ENCODE measurements at regions of chr12 and their contacts with region 1.

Region 1: DNA sequence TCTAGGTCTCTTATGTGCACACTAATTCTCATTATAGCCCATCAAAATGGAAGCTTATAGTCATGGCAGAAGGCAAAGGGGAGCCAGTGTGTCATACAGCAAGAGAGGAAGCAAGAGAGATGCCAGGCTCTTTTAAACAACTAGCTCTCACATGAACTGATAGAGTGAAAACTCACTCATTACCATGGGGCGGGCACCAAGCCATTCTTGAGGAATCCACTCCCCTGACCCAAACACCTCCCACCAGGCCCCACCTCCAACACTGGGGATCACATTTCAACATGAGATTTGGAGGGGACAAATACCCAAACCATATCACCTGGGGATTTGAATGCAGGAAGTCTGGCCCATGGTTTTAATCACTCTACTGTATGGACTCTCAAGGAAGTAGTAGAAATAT is 36.9 kb upstream of the CRACR2A start:
- H3K4me3 ChIP-seq: no peak overlapping the region
- H3K27ac ChIP-seq: no peak overlapping the region
- H3K4me1 ChIP-seq: no peaks in the 10 kb centered on the region
- CTCF ChIP-seq: no peak

Region 2: DNA sequence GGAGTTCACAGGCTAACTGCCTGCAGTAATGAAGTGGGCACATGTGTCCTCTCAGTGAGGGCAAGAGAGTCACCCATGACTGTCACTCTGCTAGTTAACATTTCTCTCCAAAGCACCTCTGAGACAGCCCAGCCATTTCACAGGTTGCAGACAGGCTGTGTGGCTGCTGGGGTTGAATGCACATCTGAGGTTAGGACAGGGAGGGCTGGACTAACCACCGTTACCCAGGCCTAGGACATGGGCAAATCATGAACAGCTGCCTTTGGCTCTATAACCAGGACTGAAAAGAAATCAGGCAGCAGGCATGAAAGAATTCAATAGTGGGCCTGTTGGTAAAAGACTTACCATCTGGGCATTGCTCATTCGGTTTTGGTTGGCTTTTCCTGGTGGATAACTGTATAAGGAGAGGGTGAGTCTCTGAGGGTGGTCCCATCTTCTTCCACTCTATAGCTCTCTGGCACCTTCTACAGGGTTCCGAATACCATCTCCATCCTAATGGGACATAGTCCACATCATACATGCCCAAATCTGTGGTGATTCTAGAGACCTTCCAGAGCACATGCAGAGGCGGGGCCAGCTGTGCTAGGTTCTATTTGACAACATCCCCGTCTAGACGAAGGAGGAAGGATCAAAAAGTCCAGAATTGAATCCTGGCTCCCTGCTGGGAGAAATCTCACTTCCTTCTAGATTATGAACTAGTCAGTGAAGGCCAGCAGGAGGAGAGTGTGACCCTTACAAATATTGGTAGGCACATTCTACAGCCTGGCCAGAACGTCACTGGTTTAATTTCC is 47.8 kb before region 1 on chr12:
- CTCF ChIA-PET with region 1: no interaction called
- POLR2A ChIA-PET with region 1: no interaction called
- H3K4me3 ChIP-seq: no peak overlapping the region
- H3K27ac ChIP-seq: no peak overlapping the region
- H3K4me1 ChIP-seq: no peaks in the 10 kb centered on the region
- CTCF ChIP-seq: no peak

Region 3: GRCh38 chr12:3803865-3804472 is 14.1 kb after region 1 on chr12:
- CTCF ChIA-PET with region 1: interaction called, 14 read pairs
- POLR2A ChIA-PET with region 1: no interaction called
- H3K4me3 ChIP-seq: no peak overlapping the region
- H3K27ac ChIP-seq: no peak overlapping the region
- H3K4me1 ChIP-seq: no peaks in the 10 kb centered on the region
- CTCF ChIP-seq: peak; percentile 49